ENCODE measurements at regions of chr1 and their contacts with region 1.

Region 1: GRCh38 chr1:85584264-85584781 is 3.8 kb downstream of the CCN1 start:
- DNase-seq: peak; percentile 99
- ATAC-seq: peak; percentile 33
- H3K4me3 ChIP-seq: peak overlapping the region; percentile 76 to 88
- H3K27ac ChIP-seq: peak overlapping the region; percentile 100
- H3K4me1 ChIP-seq: peaks cover 40% of the 10 kb centered on the region
- H3K27me3 ChIP-seq: no peaks in the 10 kb centered on the region
- CTCF ChIP-seq: no peak

Region 2: DNA sequence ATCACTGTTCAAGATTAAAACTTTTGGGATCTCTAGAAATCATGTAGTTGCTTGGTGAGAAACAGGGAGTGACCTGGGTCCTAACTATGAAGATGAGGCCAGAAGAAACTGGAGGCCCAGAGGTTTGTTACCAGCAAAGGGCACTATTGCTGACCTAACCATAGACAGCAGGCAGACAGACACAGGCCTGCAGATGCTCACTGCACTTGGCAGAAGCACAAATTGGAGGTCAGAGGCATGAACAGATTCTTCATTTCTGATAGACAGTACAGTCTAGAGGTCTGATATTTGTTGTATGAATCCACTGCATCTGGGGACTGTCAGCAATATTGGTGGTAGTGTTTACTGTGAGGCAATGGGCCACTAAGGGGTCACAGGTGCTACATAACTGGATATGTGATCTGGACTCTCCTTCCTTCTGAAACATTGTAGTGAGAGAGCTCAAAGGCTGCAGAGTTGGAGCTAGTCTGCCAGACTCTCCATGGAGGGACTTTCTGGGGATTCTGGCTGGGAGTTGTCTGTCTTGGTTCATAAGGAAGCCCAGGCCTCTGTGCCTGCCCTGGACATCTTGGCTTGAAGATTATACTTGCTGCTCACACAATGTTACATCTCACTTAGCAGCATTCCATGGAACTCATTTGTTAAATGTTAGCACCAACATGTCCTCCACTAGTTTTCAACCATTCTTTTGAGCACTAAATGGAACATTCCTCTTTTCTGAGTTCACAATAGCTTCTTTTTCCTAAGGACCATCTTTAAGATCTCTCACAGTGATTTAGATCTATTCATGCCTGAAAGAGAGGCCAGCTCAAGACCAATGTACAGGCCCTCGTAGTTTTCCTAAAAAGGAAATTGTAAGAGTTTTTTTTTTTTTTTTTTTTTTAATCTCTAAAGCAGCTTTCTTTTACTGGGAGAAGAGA is 30.6 kb before region 1 on chr1:
- CTCF ChIA-PET with region 1: interaction called, 14 read pairs
- POLR2A ChIA-PET with region 1: interaction called, 5 read pairs
- in situ Hi-C with region 1: no loop called
- intact Hi-C with region 1: no loop called
- DNase-seq: no peak
- ATAC-seq: peak; percentile 2
- H3K4me3 ChIP-seq: no peak overlapping the region
- H3K27ac ChIP-seq: peak overlapping the region; percentile 91
- H3K4me1 ChIP-seq: peaks cover 72% of the 10 kb centered on the region
- H3K27me3 ChIP-seq: no peaks in the 10 kb centered on the region
- CTCF ChIP-seq: no peak; the same call in 1 of the 2 replicates

Region 3: GRCh38 chr1:85599076-85599491 is 14.8 kb after region 1 on chr1:
- CTCF ChIA-PET with region 1: interaction called, 3 read pairs
- POLR2A ChIA-PET with region 1: interaction called, 10 read pairs
- in situ Hi-C with region 1: no loop called
- intact Hi-C with region 1: no loop called
- DNase-seq: no peak
- ATAC-seq: peak; percentile 72
- H3K4me3 ChIP-seq: no peak overlapping the region
- H3K27ac ChIP-seq: peak overlapping the region; percentile 58
- H3K4me1 ChIP-seq: peaks cover 25% of the 10 kb centered on the region
- H3K27me3 ChIP-seq: no peaks in the 10 kb centered on the region
- CTCF ChIP-seq: no peak

Region 4: GRCh38 chr1:85607126-85607912 is 23.0 kb after region 1 on chr1:
- CTCF ChIA-PET with region 1: interaction called, 3 read pairs
- POLR2A ChIA-PET with region 1: interaction called, 15 read pairs
- in situ Hi-C with region 1: no loop called
- intact Hi-C with region 1: no loop called
- DNase-seq: peak; percentile 100
- ATAC-seq: peak; percentile 92
- H3K4me3 ChIP-seq: no peak overlapping the region
- H3K27ac ChIP-seq: peak overlapping the region; percentile 98
- H3K4me1 ChIP-seq: peaks cover 47% of the 10 kb centered on the region
- H3K27me3 ChIP-seq: no peaks in the 10 kb centered on the region
- CTCF ChIP-seq: no peak

Region 5: DNA sequence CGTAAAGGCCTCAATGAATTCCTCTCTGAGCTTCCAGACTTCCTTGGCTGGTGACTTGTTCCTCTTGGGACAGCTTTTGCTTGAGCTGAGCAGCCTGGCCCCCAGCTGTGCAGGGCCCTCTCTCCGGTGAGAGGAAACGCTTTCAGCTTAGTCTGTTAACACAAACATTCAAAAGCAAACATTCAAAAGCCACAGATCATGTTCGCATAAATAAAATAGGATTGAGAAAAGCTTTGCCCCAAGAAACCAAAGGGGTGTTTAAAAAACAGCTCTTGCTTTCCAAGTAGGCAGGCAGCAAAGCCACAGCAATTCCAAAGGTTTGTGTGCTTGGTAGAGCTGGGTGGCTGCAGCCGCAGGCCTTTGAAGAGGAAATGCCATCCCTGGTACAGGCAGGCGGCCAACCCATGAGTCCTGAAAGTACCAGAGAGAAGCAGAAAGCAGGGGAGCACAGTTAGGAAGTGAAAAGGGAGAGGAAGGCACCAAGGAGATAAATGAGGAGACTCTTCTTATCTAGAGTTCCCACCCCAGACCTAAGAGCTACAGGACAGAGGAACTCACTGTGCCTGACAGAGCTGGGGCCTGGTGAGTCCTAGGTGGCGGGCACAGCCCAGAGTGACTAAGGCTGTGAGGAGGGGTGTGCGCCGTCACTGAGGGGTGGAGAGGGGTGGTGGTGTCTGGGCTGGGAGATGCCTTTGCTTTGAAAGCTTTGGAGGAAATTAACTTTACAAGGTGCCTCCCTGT is 44.6 kb after region 1 on chr1:
- CTCF ChIA-PET with region 1: interaction called, 5 read pairs
- POLR2A ChIA-PET with region 1: interaction called, 19 read pairs
- in situ Hi-C with region 1: no loop called
- intact Hi-C with region 1: loop called (anchors 2 kb)
- DNase-seq: peak; percentile 95
- ATAC-seq: peak; percentile 97
- H3K4me3 ChIP-seq: peak overlapping the region; percentile 15 to 45
- H3K27ac ChIP-seq: peak overlapping the region; percentile 96
- H3K4me1 ChIP-seq: peaks cover 31% of the 10 kb centered on the region
- H3K27me3 ChIP-seq: no peaks in the 10 kb centered on the region
- CTCF ChIP-seq: no peak